ENCODE measurements at regions of chr2 and their contacts with region 1.

Region 1: GRCh38 chr2:18749912-18750526 is 160.7 kb upstream of the NT5C1B start:
- DNase-seq: peak; percentile 68
- H3K4me3 Mint-ChIP-seq: no peak overlapping the region
- H3K27ac Mint-ChIP-seq: no peak overlapping the region
- H3K4me1 Mint-ChIP-seq: no peaks in the 10 kb centered on the region
- H3K27me3 Mint-ChIP-seq: no peaks in the 10 kb centered on the region
- CTCF ChIP-seq: peak; percentile 42

Region 2: GRCh38 chr2:18435421-18436037 is 314.5 kb before region 1 on chr2:
- CTCF ChIA-PET with region 1: no interaction called
- intact Hi-C with region 1: loop called (anchors 10 kb)
- DNase-seq: peak; percentile 46
- H3K4me3 Mint-ChIP-seq: no peak overlapping the region
- H3K27ac Mint-ChIP-seq: no peak overlapping the region
- H3K4me1 Mint-ChIP-seq: no peaks in the 10 kb centered on the region
- H3K27me3 Mint-ChIP-seq: peaks cover 43% of the 10 kb centered on the region
- CTCF ChIP-seq: peak; percentile 59

Region 3: GRCh38 chr2:18824261-18824790 is 74.3 kb after region 1 on chr2:
- CTCF ChIA-PET with region 1: no interaction called
- intact Hi-C with region 1: loop called (anchors 1 kb)
- DNase-seq: peak; percentile 12
- H3K4me3 Mint-ChIP-seq: no peak overlapping the region
- H3K27ac Mint-ChIP-seq: no peak overlapping the region
- H3K4me1 Mint-ChIP-seq: peaks cover 28% of the 10 kb centered on the region
- H3K27me3 Mint-ChIP-seq: no peaks in the 10 kb centered on the region
- CTCF ChIP-seq: no peak

Region 4: GRCh38 chr2:18883616-18884456 is 133.8 kb after region 1 on chr2:
- CTCF ChIA-PET with region 1: no interaction called
- intact Hi-C with region 1: loop called (anchors 2 kb)
- DNase-seq: peak; percentile 54
- H3K4me3 Mint-ChIP-seq: no peak overlapping the region
- H3K27ac Mint-ChIP-seq: no peak overlapping the region
- H3K4me1 Mint-ChIP-seq: peaks cover 8% of the 10 kb centered on the region
- H3K27me3 Mint-ChIP-seq: no peaks in the 10 kb centered on the region
- CTCF ChIP-seq: no peak

Region 5: DNA sequence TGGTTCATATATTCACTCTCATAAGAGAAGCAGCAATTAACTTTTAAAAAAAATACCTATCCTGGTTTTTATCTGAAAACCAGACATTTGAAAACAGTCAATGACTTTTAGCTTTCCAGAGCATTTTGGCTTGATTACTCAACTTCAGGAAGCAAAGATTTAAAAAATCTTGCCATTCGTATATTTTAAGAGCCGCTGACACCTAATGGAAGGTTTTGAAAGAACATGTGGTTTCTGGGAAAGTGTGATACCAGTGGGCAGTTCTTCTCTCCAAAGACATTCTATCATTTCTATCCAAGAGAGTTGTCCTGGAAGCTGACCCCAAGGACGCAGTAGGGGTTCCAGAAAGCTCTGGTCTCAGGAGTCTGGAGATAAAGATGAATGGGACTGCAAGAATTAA is 917.1 kb after region 1 on chr2:
- CTCF ChIA-PET with region 1: no interaction called
- intact Hi-C with region 1: loop called (anchors 10 kb)
- DNase-seq: no peak
- H3K4me3 Mint-ChIP-seq: no peak overlapping the region
- H3K27ac Mint-ChIP-seq: no peak overlapping the region
- H3K4me1 Mint-ChIP-seq: peaks cover 25% of the 10 kb centered on the region
- H3K27me3 Mint-ChIP-seq: no peaks in the 10 kb centered on the region
- CTCF ChIP-seq: no peak

Measured in Calu3 (cell line).